MCF 10A (cell line): ENCODE measurements at regions of chr6 and their contacts with region 1.

Region 1: DNA sequence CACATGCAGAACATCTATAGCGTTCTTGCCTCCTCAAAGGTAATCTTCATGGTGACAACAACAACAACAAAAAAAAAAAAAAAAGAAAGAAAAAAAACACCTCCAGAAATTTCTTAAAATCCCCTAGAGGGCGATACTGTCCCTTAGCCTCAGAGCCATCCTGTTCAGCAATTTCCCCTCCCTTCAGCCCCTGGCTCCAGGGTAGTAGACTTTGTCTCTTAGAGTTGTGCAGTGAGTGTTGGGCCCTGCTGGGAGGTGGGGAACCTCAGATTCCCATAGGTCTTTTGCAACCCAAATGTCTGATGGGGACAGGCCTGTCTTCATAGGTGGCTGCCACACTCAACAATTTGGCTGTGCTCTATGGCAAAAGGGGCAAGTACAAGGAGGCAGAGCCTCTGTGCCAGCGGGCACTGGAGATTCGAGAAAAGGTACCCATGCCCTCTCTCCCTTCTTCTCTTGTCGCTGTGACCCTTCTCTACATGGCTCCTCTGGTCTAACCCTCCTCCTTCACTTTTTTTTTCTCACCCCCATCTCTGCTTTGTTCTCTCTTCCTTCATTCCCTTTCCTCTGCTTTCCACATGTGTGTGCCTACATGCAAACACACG is 6.0 kb upstream of the PTK7 start:
- DNase-seq: peak; percentile 65
- H3K4me3 Mint-ChIP-seq: no peak overlapping the region
- H3K27ac Mint-ChIP-seq: peak overlapping the region; percentile 75
- H3K4me1 Mint-ChIP-seq: no peaks in the 10 kb centered on the region
- H3K27me3 Mint-ChIP-seq: no peaks in the 10 kb centered on the region
- CTCF ChIP-seq: peak; percentile 62

Region 2: GRCh38 chr6:43129434-43130194 is 59.5 kb after region 1 on chr6:
- CTCF ChIA-PET with region 1: interaction called, 5 read pairs
- POLR2A ChIA-PET with region 1: no interaction called
- intact Hi-C with region 1: loop called (anchors 1 kb)
- DNase-seq: peak; percentile 65
- H3K4me3 Mint-ChIP-seq: no peak overlapping the region
- H3K27ac Mint-ChIP-seq: peak overlapping the region; percentile 57
- H3K4me1 Mint-ChIP-seq: peaks cover 24% of the 10 kb centered on the region
- H3K27me3 Mint-ChIP-seq: no peaks in the 10 kb centered on the region
- CTCF ChIP-seq: peak; percentile 68

Region 3: DNA sequence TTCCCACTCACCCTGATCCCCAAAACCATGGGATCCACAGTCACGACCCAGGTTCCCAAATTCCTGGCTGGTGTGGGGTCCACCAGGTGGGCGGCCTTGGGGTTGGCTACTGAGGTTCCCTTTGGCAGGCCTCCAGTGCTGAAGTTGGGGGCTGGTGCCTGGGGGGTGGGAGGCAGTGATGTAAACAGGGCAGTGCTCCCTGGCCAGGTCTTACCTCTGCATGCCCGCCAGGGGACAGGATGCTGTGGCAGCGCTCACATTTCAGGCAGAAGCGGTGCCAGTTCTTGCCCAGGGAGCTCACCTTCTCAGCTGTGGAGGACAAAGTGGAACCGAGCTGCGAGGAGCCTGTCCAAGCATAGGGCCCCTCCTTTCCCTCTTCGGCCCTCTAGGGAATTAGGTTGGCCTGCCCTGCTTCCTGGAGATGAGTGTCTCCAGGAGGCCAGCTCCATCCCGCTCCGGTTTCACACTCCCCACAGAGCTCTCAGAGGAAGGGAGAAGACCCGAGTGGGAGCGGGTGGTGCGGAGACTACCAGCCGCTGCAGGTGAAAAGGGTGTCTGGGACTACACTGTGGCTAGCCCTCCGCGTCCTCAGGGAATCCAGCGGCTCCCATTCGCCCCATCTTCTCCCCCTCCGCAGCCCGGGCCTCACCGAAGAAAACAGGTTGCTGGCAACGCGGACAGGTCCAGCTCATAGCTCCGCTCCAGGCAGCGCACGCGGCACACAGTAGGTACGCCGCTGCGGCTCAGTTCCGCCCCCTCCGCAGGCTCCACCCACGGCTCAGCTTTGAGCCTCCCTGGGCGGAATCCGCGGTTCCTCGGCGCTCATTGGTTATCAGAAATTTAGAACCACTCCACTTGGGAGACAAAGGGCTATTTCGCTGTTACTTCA is 238.2 kb after region 1 on chr6 and contains the start of gene CRIP3:
- CTCF ChIA-PET with region 1: no interaction called
- POLR2A ChIA-PET with region 1: no interaction called
- intact Hi-C with region 1: no loop called
- DNase-seq: peak; percentile 56
- H3K4me3 Mint-ChIP-seq: peak within 1 kb of the TSS; percentile 61
- H3K27ac Mint-ChIP-seq: no peak within 1 kb of the TSS
- H3K4me1 Mint-ChIP-seq: no peaks in the 10 kb centered on the region
- H3K27me3 Mint-ChIP-seq: no peaks in the 10 kb centered on the region
- CTCF ChIP-seq: peak; percentile 34
- total RNA-seq, gene CRIP3: not detected in 2 replicates